HCT116 (cell line): ENCODE measurements at regions of chr10 and their contacts with region 1.

Region 1: DNA sequence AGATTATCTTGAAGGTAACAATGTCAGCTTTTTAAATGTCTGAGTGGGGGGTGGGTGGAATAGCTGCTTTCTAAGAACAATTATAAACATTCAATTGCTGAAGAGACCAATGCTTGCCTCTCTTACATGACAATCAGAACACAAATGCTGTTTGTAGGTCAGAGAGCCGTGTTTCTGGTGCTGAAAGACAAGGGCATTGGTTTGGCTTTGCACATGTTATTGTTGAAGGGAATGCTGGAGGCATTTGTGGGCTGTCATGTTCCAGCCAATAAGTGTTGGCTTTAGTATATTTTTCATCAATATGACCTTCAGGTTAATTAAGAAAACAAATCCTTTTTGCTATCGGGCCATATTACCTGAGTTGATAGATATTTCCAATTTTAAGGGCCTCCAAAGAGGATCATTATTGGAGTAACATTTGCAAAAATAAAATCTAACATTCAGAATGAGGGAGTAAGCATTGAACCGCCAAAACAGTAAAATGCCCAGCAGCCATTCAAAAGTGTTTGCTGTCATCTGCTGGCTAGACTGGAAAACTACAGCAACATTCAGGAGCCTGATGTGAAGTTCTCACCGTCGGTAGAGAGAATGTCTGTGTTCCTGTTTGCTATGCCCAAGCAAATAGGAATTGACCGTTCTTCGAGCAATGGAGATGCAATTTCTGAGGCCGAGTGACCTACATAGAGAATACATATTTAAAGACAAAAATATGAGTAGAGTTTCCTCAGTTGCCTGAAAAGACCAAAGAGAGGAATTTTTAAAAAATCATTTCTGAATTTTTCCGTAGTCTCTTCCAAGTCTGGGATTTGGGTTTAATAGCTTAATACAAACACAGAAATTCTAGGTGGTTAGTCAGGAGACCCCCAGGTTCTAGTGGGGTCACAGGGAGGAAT is 118.9 kb downstream of the APBB1IP start:
- DNase-seq: peak; percentile 50
- ATAC-seq: peak; percentile 89
- H3K4me3 ChIP-seq: peak overlapping the region; percentile 10 to 31
- H3K27ac ChIP-seq: no peak overlapping the region
- H3K4me1 ChIP-seq: peaks cover 0 to 7% of the 10 kb centered on the region in 2 experiments; a peak in 2 of 4 replicates
- H3K27me3 ChIP-seq: peaks cover 22% of the 10 kb centered on the region; the same call in 1 of the 2 replicates
- CTCF ChIP-seq: peak; percentile 75 to 93 (median 76)
- POLR2A ChIP-seq: no peak
- RAD21 ChIP-seq: peak; percentile 91

Region 2: DNA sequence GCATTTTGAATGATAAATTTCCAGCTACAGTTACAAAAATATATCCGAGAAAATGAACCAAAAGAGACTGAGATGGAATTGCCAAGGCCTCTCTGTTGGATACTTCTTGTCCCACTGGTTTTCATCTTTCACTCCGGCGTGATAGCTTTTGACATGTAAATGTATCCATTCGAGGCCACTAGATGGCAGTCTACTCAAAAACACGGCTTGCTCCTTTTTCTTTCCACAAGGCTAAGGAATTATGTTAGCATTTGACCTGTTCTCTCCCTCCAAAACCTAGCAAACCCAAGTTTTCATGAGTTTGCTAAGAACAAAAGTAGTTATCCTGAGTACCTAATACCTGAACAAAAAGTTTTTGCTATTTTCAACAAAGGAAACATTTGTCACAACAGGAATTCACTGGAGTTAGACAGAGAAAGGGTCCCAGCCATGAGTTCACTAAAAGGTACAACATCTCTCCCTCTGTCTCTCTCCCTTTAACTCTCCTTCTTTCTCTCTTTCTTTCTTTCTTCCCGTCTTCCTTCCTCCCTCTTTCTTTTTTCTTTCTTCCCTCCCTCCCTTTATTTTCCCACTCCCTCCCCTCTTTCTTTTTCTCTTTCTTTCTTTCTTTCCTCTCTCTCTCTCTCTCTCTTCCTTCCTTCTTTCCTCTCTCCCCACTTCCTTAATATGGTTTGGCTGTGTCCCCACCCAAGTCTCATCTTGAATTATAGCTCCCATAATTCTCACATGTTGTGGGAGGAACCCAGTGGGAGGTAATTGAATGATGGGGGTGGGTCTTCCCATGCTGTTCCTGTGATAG is 830.9 kb before region 1 on chr10:
- CTCF ChIA-PET with region 1: interaction called, 3 read pairs
- POLR2A ChIA-PET with region 1: no interaction called
- RAD21 ChIA-PET with region 1: no interaction called
- intact Hi-C with region 1: loop called (anchors 5 kb)
- DNase-seq: peak; percentile 35
- ATAC-seq: peak; percentile 81
- H3K4me3 ChIP-seq: no peak overlapping the region
- H3K27ac ChIP-seq: no peak overlapping the region
- H3K4me1 ChIP-seq: no peaks in the 10 kb centered on the region
- H3K27me3 ChIP-seq: peaks cover 19% of the 10 kb centered on the region; the same call in 1 of the 2 replicates
- CTCF ChIP-seq: peak; percentile 20 to 77 (median 58); a peak in 4 of 6 replicates
- POLR2A ChIP-seq: no peak
- RAD21 ChIP-seq: peak; percentile 66